ENCODE measurements at regions of chr22 and their contacts with region 1.

Region 1: GRCh38 chr22:37544955-37545699 is 15.2 kb upstream of the CDC42EP1 start:
- DNase-seq: peak; percentile 82 to 89 (median 86)
- ATAC-seq: peak; percentile 68 to 75 (median 69)
- H3K4me3 ChIP-seq: peak overlapping the region in 1 of 3 donors; percentile 44
- H3K27ac ChIP-seq: peak overlapping the region; percentile 85 to 89 (median 86)
- H3K4me1 ChIP-seq: peaks cover 0 to 52% (median 24%) of the 10 kb centered on the region in 4 donors
- H3K27me3 ChIP-seq: no peaks in the 10 kb centered on the region
- CTCF ChIP-seq: peak; percentile 78 to 89 (median 86)
- POLR2A ChIP-seq: no peak

Region 2: DNA sequence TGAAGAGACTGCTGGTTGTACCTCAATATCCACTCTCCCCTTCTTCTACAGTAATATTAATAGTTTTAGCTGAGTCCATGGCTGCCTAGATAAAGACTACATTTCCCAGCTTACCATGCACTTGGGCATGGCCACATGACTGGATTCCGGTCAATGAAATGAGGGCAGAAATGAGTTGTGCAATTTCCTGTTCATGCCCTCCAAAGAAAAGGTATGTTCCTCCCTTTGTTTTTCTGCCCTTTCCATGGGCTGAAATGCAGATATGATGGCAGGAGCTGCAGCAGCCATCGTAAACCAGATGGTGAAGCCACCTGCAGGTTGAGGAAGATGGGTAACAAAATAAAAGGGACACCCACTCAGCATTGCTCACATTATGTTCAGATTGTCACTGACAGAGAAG is 102.6 kb before region 1 on chr22:
- intact Hi-C with region 1: no loop called
- DNase-seq: no peak
- ATAC-seq: peak in 3 of 4 donors; percentile 35 to 72 (median 62)
- H3K4me3 ChIP-seq: no peak overlapping the region
- H3K27ac ChIP-seq: no peak overlapping the region
- H3K4me1 ChIP-seq: no peaks in the 10 kb centered on the region
- H3K27me3 ChIP-seq: no peaks in the 10 kb centered on the region
- CTCF ChIP-seq: no peak
- POLR2A ChIP-seq: no peak

Region 3: DNA sequence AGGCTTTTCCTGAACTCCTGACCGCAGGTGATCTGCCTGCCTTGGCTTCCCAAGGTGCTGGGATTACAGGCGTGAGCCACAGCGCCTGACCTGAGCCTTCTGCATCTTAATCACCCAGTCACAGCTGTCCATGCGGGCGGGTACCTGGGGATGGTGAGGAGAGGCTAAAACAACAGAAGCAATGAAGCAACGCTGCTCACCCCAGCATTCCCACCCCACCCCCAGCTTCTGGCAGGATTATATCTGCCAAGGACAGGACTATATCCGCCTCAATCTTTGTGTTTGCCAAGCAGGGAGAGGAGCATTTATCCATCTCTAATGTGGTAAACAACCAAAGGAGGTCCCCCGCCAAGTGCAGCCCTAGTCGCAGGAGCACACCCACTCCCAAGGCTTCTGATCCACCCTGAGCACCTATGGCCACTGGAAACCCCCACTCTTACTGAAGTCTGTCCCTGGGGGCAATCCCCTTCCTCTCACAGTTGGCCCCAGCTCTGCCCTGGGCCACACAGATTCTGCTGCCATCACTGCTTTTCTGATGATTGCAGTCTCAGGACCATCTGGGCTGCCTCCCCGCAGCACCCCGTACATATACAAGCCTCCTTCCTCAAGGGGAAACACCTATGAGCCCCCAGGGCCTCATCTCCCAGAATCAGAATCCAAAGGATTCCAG is 43.6 kb after region 1 on chr22:
- intact Hi-C with region 1: loop called in 1 of 2 experiments (anchors 5 kb)
- DNase-seq: peak in 1 of 3 donors; percentile 69
- ATAC-seq: peak; percentile 37 to 75 (median 61)
- H3K4me3 ChIP-seq: no peak overlapping the region
- H3K27ac ChIP-seq: peak overlapping the region in 1 of 3 donors; percentile 29
- H3K4me1 ChIP-seq: peaks cover 0 to 15% (median 4%) of the 10 kb centered on the region in 4 donors
- H3K27me3 ChIP-seq: no peaks in the 10 kb centered on the region
- CTCF ChIP-seq: no peak
- POLR2A ChIP-seq: no peak

Region 4: DNA sequence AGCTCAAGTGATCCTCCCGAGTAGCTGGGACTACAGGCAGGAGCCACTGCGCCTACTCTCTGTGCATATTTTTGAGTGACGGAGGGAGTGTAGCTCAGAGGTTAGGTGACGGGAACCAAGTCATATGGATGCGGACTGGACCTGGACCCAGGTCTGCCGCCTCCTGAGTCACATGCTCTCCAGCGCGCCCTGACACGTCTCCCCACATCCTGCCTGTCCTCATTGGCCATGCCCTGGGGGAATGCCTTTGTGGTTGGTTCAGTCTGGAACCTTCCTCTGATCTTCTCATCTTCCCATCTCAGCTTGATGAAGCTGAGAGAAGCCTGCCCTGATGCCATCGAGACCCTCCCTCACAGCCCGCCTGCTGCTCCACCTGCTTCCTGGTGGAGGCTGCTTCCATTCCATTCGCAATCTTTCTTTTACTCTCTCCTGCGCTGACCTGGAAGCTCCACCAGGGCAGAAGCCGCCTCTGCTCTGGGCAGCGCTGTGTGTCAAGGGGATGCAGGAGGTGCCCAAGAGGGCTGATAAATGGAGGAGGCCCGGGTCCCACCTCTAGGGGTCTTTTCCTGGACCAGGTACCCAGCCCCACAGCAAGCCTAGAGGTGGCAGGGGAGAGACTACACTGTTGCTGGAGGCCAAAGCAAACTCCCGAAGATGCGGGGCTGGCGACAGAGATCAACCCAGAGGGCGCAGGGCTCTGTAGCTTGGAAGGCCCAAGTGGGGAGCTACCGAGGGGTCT is 579.3 kb after region 1 on chr22:
- intact Hi-C with region 1: no loop called
- DNase-seq: no peak
- ATAC-seq: no peak
- H3K4me3 ChIP-seq: no peak overlapping the region
- H3K27ac ChIP-seq: no peak overlapping the region
- H3K4me1 ChIP-seq: no peaks in the 10 kb centered on the region
- H3K27me3 ChIP-seq: no peaks in the 10 kb centered on the region
- CTCF ChIP-seq: no peak
- POLR2A ChIP-seq: no peak

Measured in right lobe of liver (tissue), 6 donors.